ENCODE measurements at regions of chr16 and their contacts with region 1.

Region 1: GRCh38 chr16:85902366-85903155 is 3.6 kb downstream of the IRF8 start:
- DNase-seq: peak; percentile 42 to 83 (median 55)
- H3K4me3 ChIP-seq: peak overlapping the region; percentile 23 to 26
- H3K4me3 Mint-ChIP-seq: peak overlapping the region; percentile 84 to 95 (median 90)
- H3K27ac ChIP-seq: no peak overlapping the region
- H3K27ac Mint-ChIP-seq: peak overlapping the region; percentile 53 to 96 (median 77)
- H3K4me1 ChIP-seq: peaks cover 37% of the 10 kb centered on the region
- H3K4me1 Mint-ChIP-seq: peaks cover 23 to 44% (median 31%) of the 10 kb centered on the region in 4 donors
- H3K27me3 ChIP-seq: peaks cover 12% of the 10 kb centered on the region
- H3K27me3 Mint-ChIP-seq: peaks cover 23 to 27% of the 10 kb centered on the region in 2 donors

Region 2: GRCh38 chr16:85688586-85689284 is 213.8 kb before region 1 on chr16 and contains the start of gene GINS2:
- CTCF ChIA-PET with region 1: no interaction called
- POLR2A ChIA-PET with region 1: no interaction called
- intact Hi-C with region 1: no loop called
- DNase-seq: peak; percentile 88 to 91 (median 90)
- H3K4me3 ChIP-seq: peak within 1 kb of the TSS; percentile 23 to 75
- H3K4me3 Mint-ChIP-seq: peak within 1 kb of the TSS; percentile 71 to 85 (median 82)
- H3K27ac ChIP-seq: peak within 1 kb of the TSS; percentile 34
- H3K27ac Mint-ChIP-seq: peak within 1 kb of the TSS in 4 of 7 donors; percentile 53 to 76 (median 68)
- H3K4me1 ChIP-seq: peaks cover 23% of the 10 kb centered on the region
- H3K4me1 Mint-ChIP-seq: peaks cover 0 to 14% (median 8%) of the 10 kb centered on the region in 4 donors
- H3K27me3 ChIP-seq: no peaks in the 10 kb centered on the region
- H3K27me3 Mint-ChIP-seq: peaks cover 0 to 2% of the 10 kb centered on the region in 2 donors
- total RNA-seq, gene GINS2: 1.2 to 1.4 TPM

Region 3: DNA sequence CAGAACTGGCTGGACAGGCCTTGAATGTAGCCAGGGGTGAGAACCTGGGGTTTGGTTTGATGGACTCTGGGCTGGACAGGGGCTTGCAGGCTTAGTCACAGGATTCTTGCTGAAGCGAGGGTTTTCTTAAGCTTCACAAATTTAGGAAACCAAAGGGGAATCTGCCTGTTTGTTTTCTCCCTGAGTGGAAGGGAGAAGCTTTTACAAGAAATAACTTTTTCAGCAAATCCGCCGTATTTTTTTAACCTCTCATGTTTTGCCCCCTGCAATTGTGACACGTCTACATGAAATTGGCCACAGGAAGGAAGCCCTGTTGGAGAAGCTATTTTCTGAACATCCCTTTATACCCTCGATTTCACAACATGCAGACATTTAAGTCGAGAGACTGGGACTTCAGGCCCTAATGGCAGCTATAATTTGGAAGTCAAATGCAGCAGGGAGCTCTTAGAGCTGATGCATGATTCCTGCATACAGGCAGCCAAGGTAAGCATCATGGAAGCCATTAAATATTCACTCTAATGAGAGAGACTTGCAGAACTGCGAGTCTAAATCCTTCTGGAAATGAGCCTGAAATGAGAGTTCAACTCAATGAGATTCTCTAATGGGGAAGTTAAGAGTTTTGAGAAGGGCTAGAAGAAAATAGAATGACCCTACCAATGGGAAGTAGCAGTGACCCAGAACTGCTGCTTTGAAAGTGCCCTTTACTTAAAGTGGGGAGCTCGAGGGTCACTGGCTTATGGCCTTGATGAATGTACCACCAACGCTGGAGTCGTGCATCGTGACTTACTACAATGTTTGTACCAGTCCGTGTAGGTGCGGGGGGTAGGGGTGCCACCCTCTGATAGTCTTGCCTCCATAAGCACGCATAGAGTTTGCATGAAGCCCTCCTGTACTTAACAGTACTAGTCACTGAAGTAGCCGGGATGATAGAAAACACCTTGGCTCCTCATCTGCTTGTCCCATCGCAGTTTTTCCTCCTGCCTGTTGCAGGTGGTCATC is 48.7 kb before region 1 on chr16:
- CTCF ChIA-PET with region 1: no interaction called
- POLR2A ChIA-PET with region 1: no interaction called
- intact Hi-C with region 1: no loop called
- DNase-seq: no peak
- H3K4me3 ChIP-seq: no peak overlapping the region
- H3K4me3 Mint-ChIP-seq: no peak overlapping the region
- H3K27ac ChIP-seq: no peak overlapping the region
- H3K27ac Mint-ChIP-seq: no peak overlapping the region
- H3K4me1 ChIP-seq: no peaks in the 10 kb centered on the region
- H3K4me1 Mint-ChIP-seq: no peaks in the 10 kb centered on the region
- H3K27me3 ChIP-seq: no peaks in the 10 kb centered on the region
- H3K27me3 Mint-ChIP-seq: peaks cover 7 to 11% of the 10 kb centered on the region in 2 donors

Region 4: DNA sequence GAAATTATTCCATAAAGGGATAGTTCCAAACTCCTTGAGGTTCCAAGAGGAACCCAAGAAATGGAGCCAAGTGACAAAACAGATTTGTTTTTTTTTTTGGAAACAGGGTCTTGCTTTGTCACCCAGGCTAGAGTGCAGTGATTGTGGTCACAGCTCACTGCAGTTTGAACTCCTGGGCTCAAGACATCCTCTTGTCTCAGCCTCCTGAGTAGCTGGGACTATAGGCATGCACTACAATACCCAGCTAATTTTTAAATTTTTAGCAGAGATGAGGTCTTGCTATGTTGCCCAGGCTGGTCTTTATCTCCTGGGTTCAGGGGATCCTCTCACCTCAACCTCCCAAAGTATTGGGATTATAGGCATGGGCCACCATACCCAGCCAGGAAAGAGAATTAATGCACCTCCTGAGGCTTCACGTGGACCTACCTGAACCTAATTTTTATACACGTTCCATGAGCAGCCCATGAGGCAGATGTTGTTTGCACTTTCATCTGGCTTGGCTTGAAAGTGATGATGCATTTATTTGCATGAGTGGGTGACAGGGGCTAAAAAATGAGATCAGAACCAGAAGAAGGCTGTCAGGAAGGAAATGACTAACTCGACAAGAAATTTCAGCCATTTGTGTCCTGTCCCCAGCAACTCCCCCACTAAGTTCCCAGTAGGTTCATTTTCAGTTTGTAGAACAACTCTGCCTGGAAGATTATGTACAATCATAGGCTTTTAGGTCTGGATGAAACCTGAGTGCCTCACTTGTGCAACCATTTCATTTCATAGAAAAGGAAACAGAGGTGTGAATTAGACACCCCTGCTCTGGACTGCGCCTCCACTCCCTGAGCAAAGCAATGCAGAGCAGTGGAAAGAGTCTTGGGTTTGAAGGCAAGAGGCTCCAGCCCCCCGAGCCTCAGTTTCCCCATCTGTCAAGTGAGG is 13.9 kb before region 1 on chr16:
- CTCF ChIA-PET with region 1: no interaction called
- POLR2A ChIA-PET with region 1: no interaction called
- intact Hi-C with region 1: no loop called
- DNase-seq: peak in 1 of 5 donors; percentile 48
- H3K4me3 ChIP-seq: no peak overlapping the region
- H3K4me3 Mint-ChIP-seq: no peak overlapping the region
- H3K27ac ChIP-seq: no peak overlapping the region
- H3K27ac Mint-ChIP-seq: peak overlapping the region in 2 of 7 donors; percentile 15 to 43
- H3K4me1 ChIP-seq: peaks cover 8% of the 10 kb centered on the region
- H3K4me1 Mint-ChIP-seq: peaks cover 4 to 13% (median 7%) of the 10 kb centered on the region in 4 donors
- H3K27me3 ChIP-seq: no peaks in the 10 kb centered on the region
- H3K27me3 Mint-ChIP-seq: peaks cover 7 to 9% of the 10 kb centered on the region in 2 donors

Region 5: GRCh38 chr16:85947230-85948137 is 44.9 kb after region 1 on chr16:
- CTCF ChIA-PET with region 1: no interaction called
- POLR2A ChIA-PET with region 1: no interaction called
- intact Hi-C with region 1: loop called (anchors 1 kb)
- DNase-seq: peak; percentile 22 to 47 (median 25)
- H3K4me3 ChIP-seq: peak overlapping the region; percentile 63 to 72
- H3K4me3 Mint-ChIP-seq: peak overlapping the region; percentile 92 to 99 (median 96)
- H3K27ac ChIP-seq: no peak overlapping the region
- H3K27ac Mint-ChIP-seq: peak overlapping the region; percentile 28 to 93 (median 90)
- H3K4me1 ChIP-seq: peaks cover 10% of the 10 kb centered on the region
- H3K4me1 Mint-ChIP-seq: peaks cover 2 to 34% (median 13%) of the 10 kb centered on the region in 4 donors
- H3K27me3 ChIP-seq: no peaks in the 10 kb centered on the region
- H3K27me3 Mint-ChIP-seq: peaks cover 5 to 8% of the 10 kb centered on the region in 2 donors

Measured in CD4-positive, alpha-beta memory T cell (primary cell).